ENCODE measurements at regions of chr19 and their contacts with region 1.

Region 1: DNA sequence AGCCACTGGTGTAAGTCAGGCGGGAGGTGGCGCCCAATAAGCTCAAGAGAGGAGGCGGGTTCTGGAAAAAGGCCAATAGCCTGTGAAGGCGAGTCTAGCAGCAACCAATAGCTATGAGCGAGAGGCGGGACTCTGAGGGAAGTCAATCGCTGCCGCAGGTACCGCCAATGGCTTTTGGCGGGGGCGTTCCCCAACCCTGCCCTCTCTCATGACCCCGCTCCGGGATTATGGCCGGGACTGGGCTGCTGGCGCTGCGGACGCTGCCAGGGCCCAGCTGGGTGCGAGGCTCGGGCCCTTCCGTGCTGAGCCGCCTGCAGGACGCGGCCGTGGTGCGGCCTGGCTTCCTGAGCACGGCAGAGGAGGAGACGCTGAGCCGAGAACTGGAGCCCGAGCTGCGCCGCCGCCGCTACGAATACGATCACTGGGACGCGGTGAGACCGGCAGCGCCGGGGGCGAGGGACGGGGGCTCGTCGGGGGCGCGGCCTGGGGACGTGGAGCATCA is at the start of gene ALKBH7:
- DNase-seq: peak; percentile 82 to 99 (median 98)
- ATAC-seq: peak; percentile 83
- H3K4me3 ChIP-seq: peak within 1 kb of the TSS; percentile 89
- H3K4me3 Mint-ChIP-seq: peak within 1 kb of the TSS; percentile 82 to 92 (median 88)
- H3K27ac ChIP-seq: peak within 1 kb of the TSS; percentile 88
- H3K27ac Mint-ChIP-seq: peak within 1 kb of the TSS; percentile 66 to 95 (median 92)
- H3K4me1 ChIP-seq: peaks cover 5 to 10% of the 10 kb centered on the region in 2 donors
- H3K4me1 Mint-ChIP-seq: peaks cover 9 to 23% (median 13%) of the 10 kb centered on the region in 7 donors
- H3K27me3 ChIP-seq: no peaks in the 10 kb centered on the region
- H3K27me3 Mint-ChIP-seq: no peaks in the 10 kb centered on the region
- total RNA-seq, gene ALKBH7: 33.6 to 90.1 (median 72.9) TPM

Region 2: DNA sequence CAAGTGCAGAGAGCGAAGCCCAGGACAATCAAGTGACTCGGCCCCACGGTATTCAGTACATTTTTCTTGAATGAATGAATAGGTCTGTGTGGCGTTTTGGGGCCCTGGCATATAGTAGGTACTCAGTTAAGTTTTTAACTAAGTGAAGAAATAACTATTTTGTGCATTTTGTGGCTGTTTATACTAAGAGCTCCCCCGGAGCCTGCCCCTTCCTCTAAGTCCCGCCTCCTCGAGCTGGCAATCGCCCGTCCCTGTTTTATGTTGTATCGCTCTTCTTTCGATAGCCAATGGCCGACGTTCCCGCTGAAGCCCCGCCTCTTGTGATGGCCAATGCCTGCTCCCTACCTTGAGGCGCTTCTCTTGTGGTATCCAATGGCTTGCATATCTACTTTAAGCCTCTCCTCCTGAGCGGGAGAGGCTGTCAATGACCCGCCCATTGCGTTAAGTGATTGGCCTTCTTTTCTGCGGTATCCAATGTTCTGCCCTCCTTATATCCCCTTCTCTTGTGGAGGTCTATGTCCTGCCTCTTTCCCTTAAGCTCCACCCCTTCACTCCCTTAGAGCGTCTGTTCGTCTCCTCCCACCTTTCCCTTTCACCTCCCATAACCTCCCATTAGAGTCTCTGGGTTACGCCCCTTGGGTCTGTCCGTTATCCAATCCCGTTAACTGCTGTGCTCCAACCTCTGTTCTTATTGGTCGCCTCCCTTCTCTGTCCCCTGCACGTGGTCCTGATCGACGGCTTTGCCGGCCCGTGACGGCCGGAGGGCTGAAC is 1901.1 kb before region 1 on chr19:
- CTCF ChIA-PET with region 1: no interaction called
- POLR2A ChIA-PET with region 1: no interaction called
- intact Hi-C with region 1: loop called (anchors 5 kb)
- DNase-seq: peak; percentile 78 to 100 (median 98)
- ATAC-seq: peak; percentile 90
- H3K4me3 ChIP-seq: peak overlapping the region; percentile 71
- H3K4me3 Mint-ChIP-seq: no peak overlapping the region
- H3K27ac ChIP-seq: peak overlapping the region; percentile 77
- H3K27ac Mint-ChIP-seq: no peak overlapping the region
- H3K4me1 ChIP-seq: peaks cover 7 to 12% of the 10 kb centered on the region in 2 donors
- H3K4me1 Mint-ChIP-seq: peaks cover 11 to 25% (median 24%) of the 10 kb centered on the region in 7 donors
- H3K27me3 ChIP-seq: no peaks in the 10 kb centered on the region
- H3K27me3 Mint-ChIP-seq: no peaks in the 10 kb centered on the region

Region 3: GRCh38 chr19:5790573-5791520 is 581.8 kb before region 1 on chr19 and contains the start of gene DUS3L:
- CTCF ChIA-PET with region 1: no interaction called
- POLR2A ChIA-PET with region 1: no interaction called
- intact Hi-C with region 1: loop called in 1 of 2 experiments (anchors 2 kb)
- DNase-seq: peak; percentile 90 to 97 (median 94)
- ATAC-seq: peak; percentile 97
- H3K4me3 ChIP-seq: peak within 1 kb of the TSS; percentile 95
- H3K4me3 Mint-ChIP-seq: peak within 1 kb of the TSS; percentile 94 to 100 (median 100)
- H3K27ac ChIP-seq: peak within 1 kb of the TSS; percentile 91
- H3K27ac Mint-ChIP-seq: peak within 1 kb of the TSS; percentile 99 to 100 (median 100)
- H3K4me1 ChIP-seq: peaks cover 8 to 12% of the 10 kb centered on the region in 2 donors
- H3K4me1 Mint-ChIP-seq: peaks cover 6 to 22% (median 15%) of the 10 kb centered on the region in 7 donors
- H3K27me3 ChIP-seq: no peaks in the 10 kb centered on the region
- H3K27me3 Mint-ChIP-seq: no peaks in the 10 kb centered on the region
- total RNA-seq, gene DUS3L: 53.2 to 179 (median 82.7) TPM

Region 4: DNA sequence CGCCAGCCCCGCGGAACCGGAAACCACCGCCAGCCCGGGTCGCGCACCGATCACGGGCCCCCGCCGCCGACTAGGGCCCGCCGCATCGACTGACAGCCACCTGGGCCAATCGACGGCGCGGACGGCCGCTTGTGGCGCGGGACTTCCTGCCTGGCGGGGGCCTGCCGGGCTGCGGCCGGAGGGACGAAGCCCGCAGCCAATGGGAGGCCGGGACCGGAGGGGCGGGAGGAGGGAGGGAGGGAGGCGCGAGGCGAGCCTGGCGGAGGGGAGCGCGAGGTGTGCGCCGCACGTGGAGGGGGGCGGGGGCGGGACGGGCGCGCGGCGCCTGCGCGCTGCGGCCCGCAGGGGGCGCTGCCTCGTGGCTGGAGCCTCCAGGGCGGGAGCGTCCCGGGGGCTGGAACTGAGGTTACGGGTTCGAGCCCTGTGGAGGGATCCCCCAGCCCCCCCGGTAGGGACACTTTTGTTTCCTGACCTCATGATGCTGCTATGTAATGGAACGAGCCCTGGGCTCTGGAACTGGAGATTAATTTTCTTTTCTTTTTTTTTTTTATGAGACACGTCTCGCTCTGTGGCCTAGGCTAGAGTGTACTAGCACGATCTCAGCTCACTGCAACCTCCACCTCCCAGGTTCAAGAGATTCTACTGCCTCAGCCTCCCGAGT is 92.6 kb before region 1 on chr19 and contains the start of gene MLLT1:
- CTCF ChIA-PET with region 1: no interaction called
- POLR2A ChIA-PET with region 1: no interaction called
- intact Hi-C with region 1: loop called in 1 of 2 experiments (anchors 1 kb)
- DNase-seq: peak; percentile 88 to 98 (median 90)
- ATAC-seq: peak; percentile 96
- H3K4me3 ChIP-seq: peak within 1 kb of the TSS; percentile 54
- H3K4me3 Mint-ChIP-seq: peak within 1 kb of the TSS; percentile 85 to 97 (median 92)
- H3K27ac ChIP-seq: peak within 1 kb of the TSS; percentile 78
- H3K27ac Mint-ChIP-seq: peak within 1 kb of the TSS; percentile 87 to 95 (median 93)
- H3K4me1 ChIP-seq: peaks cover 3 to 20% of the 10 kb centered on the region in 2 donors
- H3K4me1 Mint-ChIP-seq: peaks cover 30 to 42% (median 39%) of the 10 kb centered on the region in 7 donors
- H3K27me3 ChIP-seq: no peaks in the 10 kb centered on the region
- H3K27me3 Mint-ChIP-seq: peaks cover 0 to 6% (median 0%) of the 10 kb centered on the region in 5 donors
- total RNA-seq, gene MLLT1: 33.3 to 47.5 (median 39.0) TPM

Region 5: DNA sequence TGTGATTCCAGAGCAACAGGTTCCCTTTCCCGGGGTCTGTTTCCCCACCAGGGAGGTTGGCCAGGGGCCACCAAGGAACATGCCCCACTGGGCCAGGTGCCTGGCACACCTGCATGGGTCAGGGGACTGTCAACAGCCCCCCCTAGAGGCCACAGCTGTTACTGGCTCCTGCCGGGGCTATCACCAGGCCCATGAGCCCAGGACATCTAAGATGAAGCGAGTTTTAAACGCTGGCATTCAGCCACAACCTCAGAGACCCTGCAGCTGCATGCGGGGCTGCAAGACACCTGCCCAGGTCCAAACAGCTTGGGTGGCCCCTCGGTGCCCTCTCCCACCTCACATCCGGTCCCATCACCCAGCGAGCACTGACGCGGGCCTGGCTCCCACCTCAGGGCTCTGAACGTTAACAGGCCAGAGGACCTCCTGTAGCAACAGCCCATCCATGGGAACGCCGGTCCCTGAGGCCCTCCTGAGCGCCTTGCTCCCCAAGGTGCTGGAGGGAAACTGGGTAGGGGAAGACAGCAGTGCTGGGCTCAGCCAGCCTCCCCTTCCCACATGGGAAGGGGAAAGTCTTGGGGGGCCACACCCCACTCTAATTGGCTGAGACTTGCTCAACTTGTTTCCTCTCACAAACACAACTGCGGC is 39.9 kb after region 1 on chr19:
- CTCF ChIA-PET with region 1: no interaction called
- POLR2A ChIA-PET with region 1: no interaction called
- intact Hi-C with region 1: no loop called
- DNase-seq: peak in 6 of 9 donors; percentile 39 to 57 (median 47)
- ATAC-seq: peak; percentile 79
- H3K4me3 ChIP-seq: no peak overlapping the region
- H3K4me3 Mint-ChIP-seq: peak overlapping the region in 1 of 10 donors; percentile 20
- H3K27ac ChIP-seq: no peak overlapping the region
- H3K27ac Mint-ChIP-seq: no peak overlapping the region
- H3K4me1 ChIP-seq: no peaks in the 10 kb centered on the region
- H3K4me1 Mint-ChIP-seq: no peaks in the 10 kb centered on the region
- H3K27me3 ChIP-seq: no peaks in the 10 kb centered on the region
- H3K27me3 Mint-ChIP-seq: no peaks in the 10 kb centered on the region

Region 6: DNA sequence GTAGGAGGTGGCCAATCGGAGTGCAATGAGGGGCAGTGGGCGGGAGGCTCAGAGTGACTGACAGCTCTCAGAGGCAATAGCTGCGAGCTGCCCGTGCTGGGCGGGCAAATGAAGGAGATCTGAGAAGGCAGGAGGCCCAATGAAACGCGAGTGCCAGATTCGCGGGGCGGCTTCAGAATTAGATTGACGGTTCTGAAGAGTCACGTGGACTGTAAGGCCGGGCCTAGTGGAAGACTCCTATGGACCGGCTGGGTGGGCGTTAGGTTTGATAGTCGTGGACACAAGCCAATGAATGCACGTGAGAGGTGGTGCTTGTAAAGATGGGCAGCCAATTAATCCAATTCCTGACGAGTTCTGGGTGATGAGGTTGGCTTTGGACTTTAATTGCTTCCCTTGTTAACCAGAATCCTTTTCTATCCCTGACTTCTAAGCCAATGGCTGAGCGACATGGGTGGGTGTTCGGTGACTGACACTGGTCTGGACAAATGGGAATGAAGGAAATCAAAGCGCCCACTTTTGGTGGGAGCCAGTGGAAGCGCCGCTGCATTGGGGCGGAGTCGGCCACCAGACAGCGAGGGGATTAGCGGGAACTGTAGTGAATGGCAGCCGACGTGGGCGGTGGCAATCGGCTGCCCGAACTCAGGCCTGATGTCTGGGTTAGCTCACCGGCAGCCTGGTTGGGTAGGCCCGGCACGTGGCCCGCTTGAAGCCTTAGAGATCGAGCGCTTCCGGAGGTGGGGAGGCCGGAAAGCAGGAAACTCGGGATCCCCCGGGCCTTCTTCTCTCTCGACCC is 52.5 kb after region 1 on chr19:
- CTCF ChIA-PET with region 1: no interaction called
- POLR2A ChIA-PET with region 1: interaction called, 22 read pairs
- intact Hi-C with region 1: loop called (anchors 1 kb)
- DNase-seq: peak; percentile 66 to 100 (median 99)
- ATAC-seq: peak; percentile 89
- H3K4me3 ChIP-seq: peak overlapping the region; percentile 39
- H3K4me3 Mint-ChIP-seq: peak overlapping the region; percentile 69 to 87 (median 78)
- H3K27ac ChIP-seq: peak overlapping the region; percentile 77
- H3K27ac Mint-ChIP-seq: peak overlapping the region; percentile 78 to 97 (median 94)
- H3K4me1 ChIP-seq: peaks cover 15 to 32% of the 10 kb centered on the region in 2 donors
- H3K4me1 Mint-ChIP-seq: peaks cover 18 to 48% (median 41%) of the 10 kb centered on the region in 7 donors
- H3K27me3 ChIP-seq: no peaks in the 10 kb centered on the region
- H3K27me3 Mint-ChIP-seq: no peaks in the 10 kb centered on the region

Region 7: GRCh38 chr19:6753178-6754031 is 380.8 kb after region 1 on chr19:
- CTCF ChIA-PET with region 1: no interaction called
- POLR2A ChIA-PET with region 1: no interaction called
- intact Hi-C with region 1: loop called in 1 of 2 experiments (anchors 5 kb)
- DNase-seq: peak; percentile 64 to 86 (median 75)
- ATAC-seq: peak; percentile 96
- H3K4me3 ChIP-seq: peak overlapping the region; percentile 64
- H3K4me3 Mint-ChIP-seq: peak overlapping the region; percentile 64 to 89 (median 74)
- H3K27ac ChIP-seq: peak overlapping the region; percentile 48
- H3K27ac Mint-ChIP-seq: peak overlapping the region; percentile 41 to 93 (median 88)
- H3K4me1 ChIP-seq: no peaks in the 10 kb centered on the region
- H3K4me1 Mint-ChIP-seq: peaks cover 5 to 14% (median 11%) of the 10 kb centered on the region in 7 donors
- H3K27me3 ChIP-seq: no peaks in the 10 kb centered on the region
- H3K27me3 Mint-ChIP-seq: no peaks in the 10 kb centered on the region

Region 8: GRCh38 chr19:7919610-7920518 is 1547.2 kb after region 1 on chr19 and contains the start of gene SNAPC2:
- CTCF ChIA-PET with region 1: no interaction called
- POLR2A ChIA-PET with region 1: no interaction called
- intact Hi-C with region 1: loop called in 1 of 2 experiments (anchors 5 kb)
- DNase-seq: peak; percentile 95 to 99 (median 98)
- ATAC-seq: peak; percentile 71
- H3K4me3 ChIP-seq: peak within 1 kb of the TSS; percentile 86
- H3K4me3 Mint-ChIP-seq: peak within 1 kb of the TSS; percentile 88 to 97 (median 94)
- H3K27ac ChIP-seq: peak within 1 kb of the TSS; percentile 75
- H3K27ac Mint-ChIP-seq: peak within 1 kb of the TSS; percentile 76 to 97 (median 92)
- H3K4me1 ChIP-seq: peaks cover 25 to 34% of the 10 kb centered on the region in 2 donors
- H3K4me1 Mint-ChIP-seq: peaks cover 15 to 52% (median 38%) of the 10 kb centered on the region in 7 donors
- H3K27me3 ChIP-seq: peaks cover 3 to 20% of the 10 kb centered on the region in 2 donors
- H3K27me3 Mint-ChIP-seq: peaks cover 12 to 33% (median 14%) of the 10 kb centered on the region in 5 donors
- total RNA-seq, gene SNAPC2: 12.3 to 24.4 (median 21.4) TPM

Measured in naive thymus-derived CD4-positive, alpha-beta T cell (primary cell).